Activated CD4-positive, alpha-beta memory T cell treated with anti-CD3 and anti-CD28 coated beads for 36 hours (primary cell): ENCODE measurements at regions of chr1 and their contacts with region 1.

Region 1: DNA sequence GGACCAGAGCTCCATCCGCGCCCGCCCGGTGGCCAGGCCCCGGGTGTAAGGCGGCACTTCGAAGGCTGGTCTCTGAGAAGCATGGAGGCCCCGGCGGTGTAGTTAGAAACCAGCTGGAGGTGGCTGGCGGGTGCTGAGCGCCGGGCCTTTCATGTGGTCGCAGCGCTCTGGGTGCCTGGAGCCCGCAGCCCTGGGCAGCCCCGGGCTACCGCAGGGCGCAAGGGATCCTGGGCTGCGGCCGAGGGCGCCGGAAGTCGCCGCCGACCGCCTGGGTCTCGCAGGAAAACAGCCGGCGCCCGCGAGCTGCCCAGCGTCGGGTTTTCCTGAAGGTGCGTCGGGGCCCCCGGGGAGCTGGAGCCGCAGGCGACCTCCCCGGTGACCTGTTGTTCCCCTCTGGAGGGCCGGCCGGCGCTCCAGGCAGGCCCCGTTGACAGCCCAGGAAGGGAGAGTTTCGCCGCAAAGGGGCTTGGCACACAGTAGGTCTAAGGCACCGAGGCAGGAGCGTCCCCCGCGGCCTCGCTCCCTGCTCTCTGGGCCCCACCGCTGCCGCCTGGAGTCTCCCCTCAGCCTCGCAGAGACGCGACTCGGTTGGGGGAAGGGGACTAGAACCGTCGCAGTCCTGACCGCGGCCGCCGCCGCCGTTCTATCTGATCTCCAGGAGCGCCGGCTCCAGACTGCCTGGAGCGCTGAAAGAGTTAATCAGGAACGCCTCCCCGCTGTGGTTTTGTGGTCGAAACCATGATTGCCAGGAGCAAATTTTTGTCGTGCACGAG is 2.7 kb downstream of the GRHL3 start:
- DNase-seq: peak; percentile 86
- H3K4me3 Mint-ChIP-seq: peak overlapping the region; percentile 71
- H3K27ac Mint-ChIP-seq: no peak overlapping the region
- H3K4me1 Mint-ChIP-seq: peaks cover 37% of the 10 kb centered on the region
- H3K27me3 Mint-ChIP-seq: peaks cover 69% of the 10 kb centered on the region

Region 2: GRCh38 chr1:24216276-24217074 is 105.4 kb before region 1 on chr1:
- CTCF ChIA-PET with region 1: no interaction called
- POLR2A ChIA-PET with region 1: no interaction called
- intact Hi-C with region 1: no loop called
- DNase-seq: no peak
- H3K4me3 Mint-ChIP-seq: no peak overlapping the region
- H3K27ac Mint-ChIP-seq: no peak overlapping the region
- H3K4me1 Mint-ChIP-seq: no peaks in the 10 kb centered on the region
- H3K27me3 Mint-ChIP-seq: peaks cover 27% of the 10 kb centered on the region

Region 3: DNA sequence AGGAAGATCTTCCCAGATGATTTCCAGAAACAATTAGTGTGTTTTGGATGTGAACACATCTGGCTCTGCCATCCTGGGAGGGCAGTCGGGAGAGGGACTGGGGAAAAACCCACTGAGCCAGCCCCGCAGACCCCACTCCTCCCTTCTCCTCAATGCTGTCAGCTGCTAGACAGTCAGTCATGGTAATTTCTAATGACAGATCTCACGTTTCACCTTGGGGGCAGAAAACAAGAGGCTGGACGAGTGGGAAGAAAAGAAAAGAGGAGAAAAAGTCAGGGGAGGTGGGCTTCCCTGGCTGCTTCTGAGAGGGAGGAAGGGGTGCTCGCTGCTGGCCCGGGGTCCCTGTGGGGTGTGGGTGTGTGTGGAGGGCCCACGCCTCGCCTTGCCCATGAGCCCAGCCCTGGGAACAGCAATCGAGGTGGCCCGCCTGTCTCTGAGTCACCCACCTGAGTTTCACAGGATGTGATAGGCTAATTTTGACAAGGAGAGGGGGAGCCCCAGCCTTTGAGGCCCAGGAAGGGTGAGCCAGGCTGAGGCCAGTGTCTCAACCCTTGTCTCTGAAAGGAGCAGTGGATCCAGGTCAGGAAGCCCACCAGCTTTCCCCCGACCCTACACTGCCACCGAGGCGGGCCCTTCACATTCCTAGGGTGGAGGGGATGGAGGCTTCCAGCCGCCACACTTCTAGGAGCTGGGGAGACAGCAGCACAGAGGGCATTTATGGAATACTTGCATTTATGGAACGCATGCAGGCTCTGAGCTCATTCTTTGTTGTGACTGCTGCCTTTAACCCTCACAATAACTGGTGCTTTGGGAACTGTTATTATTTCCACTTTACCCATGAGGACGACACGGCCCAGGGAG is 85.7 kb before region 1 on chr1:
- CTCF ChIA-PET with region 1: no interaction called
- POLR2A ChIA-PET with region 1: no interaction called
- intact Hi-C with region 1: loop called (anchors 5 kb)
- DNase-seq: peak; percentile 83
- H3K4me3 Mint-ChIP-seq: no peak overlapping the region
- H3K27ac Mint-ChIP-seq: no peak overlapping the region
- H3K4me1 Mint-ChIP-seq: peaks cover 16% of the 10 kb centered on the region
- H3K27me3 Mint-ChIP-seq: peaks cover 21% of the 10 kb centered on the region

Region 4: DNA sequence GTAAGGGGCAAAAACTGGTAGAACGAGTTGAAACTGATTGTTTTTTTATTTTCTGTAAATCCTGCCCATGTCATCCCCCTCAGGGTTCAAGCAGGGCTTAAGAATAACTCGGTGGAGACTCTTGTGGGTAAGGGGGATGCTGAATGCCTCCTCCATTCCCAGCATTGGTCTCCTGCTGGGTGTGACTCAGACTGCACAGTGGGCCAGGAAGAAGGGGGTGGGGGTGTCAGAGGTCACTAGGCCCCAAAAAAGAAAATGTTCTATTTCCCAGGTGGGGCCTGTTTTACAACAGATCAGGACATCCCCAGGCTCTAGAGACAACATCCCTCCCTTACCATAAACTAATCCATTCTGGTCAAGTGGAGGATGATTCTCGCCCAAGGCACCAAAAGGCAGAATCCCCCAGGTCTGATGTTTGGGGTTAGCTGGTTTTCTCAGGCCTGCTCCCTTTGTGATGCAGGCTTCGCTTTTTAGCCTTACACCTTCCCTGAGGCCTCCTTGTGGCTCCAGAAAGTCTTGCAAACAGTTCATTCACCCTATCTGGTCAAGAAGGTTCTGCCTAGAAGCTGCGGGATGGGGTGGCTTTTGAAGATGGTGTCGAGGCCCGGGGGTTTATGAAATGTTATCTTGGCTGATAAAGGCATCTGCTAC is 13.4 kb before region 1 on chr1:
- CTCF ChIA-PET with region 1: interaction called, 14 read pairs
- POLR2A ChIA-PET with region 1: no interaction called
- intact Hi-C with region 1: loop called (anchors 1 kb)
- DNase-seq: no peak
- H3K4me3 Mint-ChIP-seq: no peak overlapping the region
- H3K27ac Mint-ChIP-seq: no peak overlapping the region
- H3K4me1 Mint-ChIP-seq: peaks cover 3% of the 10 kb centered on the region
- H3K27me3 Mint-ChIP-seq: peaks cover 4% of the 10 kb centered on the region

Region 5: DNA sequence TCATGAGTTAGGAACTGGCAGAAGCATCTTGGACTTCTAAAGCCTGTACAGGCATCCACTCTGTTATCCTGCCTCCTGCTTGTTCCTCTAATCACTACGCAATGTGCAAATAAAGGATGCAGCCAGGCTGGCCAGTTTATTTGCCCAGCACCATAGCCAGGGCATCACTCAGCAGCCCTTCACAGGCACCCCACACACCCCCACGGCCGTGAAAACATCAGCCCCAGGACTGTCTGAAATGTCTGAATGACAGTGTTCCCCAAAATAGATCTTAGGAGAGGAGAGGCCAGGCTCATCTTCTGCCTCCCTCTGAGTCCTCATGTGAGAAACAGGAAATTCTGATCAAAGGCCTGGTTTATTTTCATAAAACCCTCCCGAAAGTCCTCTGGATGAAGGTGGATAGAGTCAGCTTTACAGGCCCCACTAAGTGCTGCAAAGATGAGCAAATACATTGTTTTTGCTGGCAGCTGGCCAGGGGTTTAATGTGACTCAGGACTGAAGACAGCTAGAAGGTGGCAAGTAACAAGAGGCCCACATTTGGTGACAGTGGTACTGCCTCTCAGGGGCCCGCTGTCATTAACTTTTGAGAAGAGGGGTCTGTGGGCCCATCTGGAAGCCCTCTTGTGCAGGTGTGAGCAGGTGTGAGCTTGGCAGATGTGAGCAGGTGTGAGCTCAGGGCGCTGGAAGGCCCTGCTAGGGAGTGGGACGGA is 30.2 kb after region 1 on chr1:
- CTCF ChIA-PET with region 1: no interaction called
- POLR2A ChIA-PET with region 1: no interaction called
- intact Hi-C with region 1: loop called (anchors 2 kb)
- DNase-seq: peak; percentile 87
- H3K4me3 Mint-ChIP-seq: no peak overlapping the region
- H3K27ac Mint-ChIP-seq: peak overlapping the region; percentile 58
- H3K4me1 Mint-ChIP-seq: peaks cover 36% of the 10 kb centered on the region
- H3K27me3 Mint-ChIP-seq: peaks cover 1% of the 10 kb centered on the region

Region 6: GRCh38 chr1:24385160-24385940 is 63.5 kb after region 1 on chr1:
- CTCF ChIA-PET with region 1: interaction called, 20 read pairs
- POLR2A ChIA-PET with region 1: interaction called, 4 read pairs
- intact Hi-C with region 1: loop called (anchors 2 kb)
- DNase-seq: peak; percentile 64
- H3K4me3 Mint-ChIP-seq: no peak overlapping the region
- H3K27ac Mint-ChIP-seq: peak overlapping the region; percentile 7
- H3K4me1 Mint-ChIP-seq: peaks cover 26% of the 10 kb centered on the region
- H3K27me3 Mint-ChIP-seq: no peaks in the 10 kb centered on the region